ENCODE measurements at regions of chr16 and their contacts with region 1.

Region 1: DNA sequence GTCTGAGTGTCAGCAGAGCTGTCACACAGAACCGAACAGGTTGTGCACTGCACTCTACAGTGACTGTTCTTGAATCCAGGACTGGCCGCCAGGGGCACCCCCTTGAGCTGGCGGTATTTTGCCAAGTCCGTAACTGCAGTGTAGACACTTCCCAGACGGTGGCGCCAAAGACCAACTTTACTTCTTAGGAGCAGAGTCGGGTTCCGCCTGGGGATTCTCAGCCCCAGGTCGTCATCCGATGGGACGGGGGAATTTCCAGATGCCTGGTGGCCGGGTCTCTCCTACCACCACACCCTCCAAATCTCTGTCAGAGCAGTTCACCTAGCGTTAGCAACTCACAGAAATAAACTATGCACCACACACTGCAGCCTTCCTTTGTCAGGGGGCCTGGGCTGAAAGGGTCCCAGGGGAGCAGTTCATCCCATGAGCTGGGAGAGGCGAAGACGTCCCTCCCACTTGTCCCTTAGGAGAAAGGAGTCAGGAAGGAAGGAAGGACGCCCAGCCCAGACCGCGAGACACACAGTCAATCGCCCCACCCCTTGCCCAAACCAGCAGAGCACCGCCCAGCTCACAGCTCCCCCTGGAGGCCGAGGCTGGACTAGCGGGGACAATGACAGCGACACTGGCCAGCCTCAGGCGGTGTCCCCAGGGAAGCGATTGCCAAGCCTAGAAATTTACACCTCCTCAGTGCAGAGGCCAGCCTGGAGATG is 7.4 kb upstream of the RIPOR1 start:
- DNase-seq: peak; percentile 89
- H3K4me3 ChIP-seq: peak overlapping the region; percentile 52 to 73
- H3K27ac ChIP-seq: peak overlapping the region; percentile 86 to 91
- H3K4me1 ChIP-seq: peaks cover 3 to 5% of the 10 kb centered on the region in 2 experiments; a peak in 2 of 4 replicates
- H3K27me3 ChIP-seq: no peaks in the 10 kb centered on the region
- CTCF ChIP-seq: peak; percentile 84
- EP300 ChIP-seq: peak in 1 of 2 experiments; percentile 2; a peak in 1 of 4 replicates
- RAD21 ChIP-seq: peak; percentile 94

Region 2: GRCh38 chr16:66988197-66988788 is 533.0 kb before region 1 on chr16 and contains the start of gene CES4A:
- CTCF ChIA-PET with region 1: no interaction called
- POLR2A ChIA-PET with region 1: no interaction called
- DNase-seq: no peak
- H3K4me3 ChIP-seq: no peak within 1 kb of the TSS
- H3K27ac ChIP-seq: no peak within 1 kb of the TSS
- H3K4me1 ChIP-seq: no peaks in the 10 kb centered on the region
- H3K27me3 ChIP-seq: no peaks in the 10 kb centered on the region
- CTCF ChIP-seq: no peak
- EP300 ChIP-seq: no peak
- RAD21 ChIP-seq: no peak
- polyA plus RNA-seq, gene CES4A: 7.3 and 13.2 TPM in 2 replicates

Region 3: DNA sequence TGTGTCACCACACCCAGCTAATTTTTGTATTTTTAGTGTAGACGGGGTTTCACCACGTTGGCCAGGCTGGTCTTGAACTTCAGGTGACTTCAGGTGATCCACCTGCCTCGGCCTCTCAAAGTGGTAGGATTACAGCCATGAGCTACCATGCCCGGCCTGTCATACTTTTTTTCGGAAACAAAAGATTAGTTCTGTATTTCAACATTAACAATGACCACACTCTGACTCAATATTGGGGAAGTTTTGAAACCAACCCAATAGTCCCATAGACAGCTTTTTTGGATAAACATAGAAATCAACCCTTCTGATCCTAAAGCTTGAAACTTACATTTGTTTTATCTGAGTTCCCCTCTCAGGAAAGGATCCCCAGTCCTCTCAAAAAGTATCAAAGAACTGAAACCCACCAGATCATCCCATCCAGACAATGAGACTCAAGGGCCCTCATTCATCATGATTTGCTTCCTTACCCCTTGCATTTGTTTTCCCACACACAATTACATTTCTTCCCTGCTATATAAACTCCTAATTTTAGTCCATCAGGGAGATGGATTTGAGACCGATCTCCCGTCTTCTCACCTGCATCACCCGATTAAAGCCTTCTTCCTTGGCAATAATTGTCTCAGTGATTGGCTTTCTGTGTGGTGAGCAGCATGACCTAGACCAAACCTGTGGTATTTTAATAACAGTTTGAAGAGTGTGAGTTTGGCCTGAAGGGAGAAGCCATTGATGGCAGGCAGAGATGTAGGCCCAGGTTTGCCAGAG is 30.7 kb before region 1 on chr16:
- CTCF ChIA-PET with region 1: interaction called, 104 read pairs
- POLR2A ChIA-PET with region 1: no interaction called
- DNase-seq: no peak
- H3K4me3 ChIP-seq: no peak overlapping the region
- H3K27ac ChIP-seq: no peak overlapping the region; a peak in 1 of 4 replicates
- H3K4me1 ChIP-seq: peaks cover 0 to 6% of the 10 kb centered on the region in 2 experiments; a peak in 1 of 4 replicates
- H3K27me3 ChIP-seq: no peaks in the 10 kb centered on the region
- CTCF ChIP-seq: no peak
- EP300 ChIP-seq: no peak
- RAD21 ChIP-seq: no peak

Region 4: DNA sequence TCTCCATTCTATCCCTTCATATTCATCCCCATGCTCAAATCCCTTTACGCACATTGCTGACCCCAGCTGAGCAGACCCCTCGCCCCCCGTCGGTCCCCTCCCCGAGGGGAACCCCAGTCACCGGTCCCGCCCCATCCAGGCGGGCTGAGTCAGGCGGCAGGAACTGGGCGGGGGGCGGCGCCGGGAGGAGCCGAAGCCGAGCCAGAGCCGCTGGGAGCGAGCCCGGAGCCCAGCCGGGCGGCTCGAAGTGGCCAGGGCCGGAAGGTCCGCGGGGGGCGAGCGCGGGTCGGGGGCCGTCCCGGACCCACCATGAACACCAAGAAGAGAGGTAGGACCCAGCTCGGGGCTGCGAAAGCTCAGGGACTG is 16.0 kb after region 1 on chr16:
- CTCF ChIA-PET with region 1: interaction called, 72 read pairs
- POLR2A ChIA-PET with region 1: interaction called, 5 read pairs
- DNase-seq: peak; percentile 85
- H3K4me3 ChIP-seq: peak overlapping the region; percentile 52 to 71
- H3K27ac ChIP-seq: peak overlapping the region in 1 of 2 experiments; percentile 47; a peak in 2 of 4 replicates
- H3K4me1 ChIP-seq: peaks cover 0 to 9% of the 10 kb centered on the region in 2 experiments; a peak in 1 of 4 replicates
- H3K27me3 ChIP-seq: no peaks in the 10 kb centered on the region
- CTCF ChIP-seq: no peak
- EP300 ChIP-seq: no peak
- RAD21 ChIP-seq: no peak

Region 5: GRCh38 chr16:67561824-67562525 is 40.7 kb after region 1 on chr16:
- CTCF ChIA-PET with region 1: interaction called, 86 read pairs
- POLR2A ChIA-PET with region 1: no interaction called
- DNase-seq: peak; percentile 98
- H3K4me3 ChIP-seq: peak overlapping the region; percentile 73 to 75
- H3K27ac ChIP-seq: peak overlapping the region; percentile 96
- H3K4me1 ChIP-seq: peaks cover 0 to 13% of the 10 kb centered on the region in 2 experiments; a peak in 2 of 4 replicates
- H3K27me3 ChIP-seq: no peaks in the 10 kb centered on the region
- CTCF ChIP-seq: no peak
- EP300 ChIP-seq: peak in 1 of 2 experiments; percentile 9; a peak in 1 of 4 replicates
- RAD21 ChIP-seq: no peak

Region 6: DNA sequence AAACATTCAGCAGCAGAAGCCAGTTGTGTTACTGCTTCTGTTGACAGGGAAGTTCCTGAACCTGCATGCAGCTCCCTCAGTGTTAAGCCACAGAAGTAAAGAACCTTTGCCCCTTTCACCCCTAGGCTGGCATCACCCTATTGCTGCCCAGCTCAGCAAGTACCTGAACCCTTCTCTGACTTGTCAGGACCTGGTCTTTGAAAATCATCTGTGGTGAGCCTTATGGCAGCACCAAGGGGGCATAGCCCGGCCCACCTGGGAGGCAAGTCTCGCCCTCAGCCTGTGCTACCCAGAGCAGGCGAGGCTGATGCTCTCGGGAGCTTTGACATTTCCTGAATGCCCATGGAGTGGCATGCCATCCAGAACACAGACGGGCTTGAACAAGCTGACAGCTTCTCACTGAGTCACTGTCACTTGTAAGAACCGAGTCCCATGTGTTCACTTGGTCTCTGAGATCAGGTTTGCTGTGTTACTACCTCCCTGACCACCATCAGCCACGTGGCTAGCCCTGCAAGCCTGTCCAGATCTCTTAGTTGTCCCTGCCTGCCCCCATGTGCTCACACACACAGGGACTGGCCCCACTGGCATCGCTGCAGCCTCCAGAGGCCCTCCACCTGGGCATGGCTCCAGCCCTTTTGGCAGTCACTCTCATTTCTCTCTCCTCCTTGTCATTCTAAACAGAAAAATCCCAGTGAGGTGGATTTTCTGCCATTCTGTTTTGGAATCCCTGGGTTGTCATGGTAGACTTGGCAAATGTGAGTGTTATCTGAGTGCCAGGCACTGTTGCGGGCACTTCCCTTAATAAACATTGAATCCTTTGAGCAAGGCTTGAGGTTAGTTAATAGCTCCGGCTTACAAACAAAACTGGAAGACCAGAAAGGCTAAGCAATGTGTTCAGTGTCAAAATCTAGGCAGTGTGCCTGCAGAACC is 120.8 kb after region 1 on chr16:
- CTCF ChIA-PET with region 1: interaction called, 98 read pairs
- POLR2A ChIA-PET with region 1: no interaction called
- DNase-seq: no peak
- H3K4me3 ChIP-seq: no peak overlapping the region
- H3K27ac ChIP-seq: no peak overlapping the region
- H3K4me1 ChIP-seq: peaks cover 0 to 4% of the 10 kb centered on the region in 2 experiments; a peak in 1 of 4 replicates
- H3K27me3 ChIP-seq: no peaks in the 10 kb centered on the region
- CTCF ChIP-seq: no peak
- EP300 ChIP-seq: no peak
- RAD21 ChIP-seq: no peak

Region 7: GRCh38 chr16:67685388-67686112 is 164.3 kb after region 1 on chr16:
- CTCF ChIA-PET with region 1: interaction called, 11 read pairs
- POLR2A ChIA-PET with region 1: no interaction called
- DNase-seq: no peak
- H3K4me3 ChIP-seq: no peak overlapping the region
- H3K27ac ChIP-seq: no peak overlapping the region
- H3K4me1 ChIP-seq: no peaks in the 10 kb centered on the region
- H3K27me3 ChIP-seq: no peaks in the 10 kb centered on the region
- CTCF ChIP-seq: no peak
- EP300 ChIP-seq: no peak
- RAD21 ChIP-seq: no peak

Region 8: DNA sequence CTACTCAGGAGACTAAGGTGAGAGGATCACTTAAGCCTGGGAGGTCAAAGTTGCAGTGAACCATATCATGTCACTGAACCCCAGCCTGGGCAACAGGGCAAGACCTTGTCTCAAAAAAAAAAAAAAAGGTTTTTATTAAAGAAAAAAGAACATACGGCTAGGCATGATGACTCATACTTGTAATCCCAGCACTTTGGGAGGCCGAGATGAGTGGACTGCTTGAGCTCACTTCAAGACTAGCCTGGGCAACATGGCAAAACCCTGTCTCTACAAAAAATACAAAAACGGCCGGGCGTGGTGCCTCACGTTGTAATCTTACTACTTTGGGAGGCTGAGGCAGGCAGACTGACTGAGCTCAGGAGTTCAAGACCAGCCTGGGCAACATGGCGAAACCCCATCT is 246.7 kb after region 1 on chr16:
- CTCF ChIA-PET with region 1: no interaction called
- POLR2A ChIA-PET with region 1: no interaction called
- DNase-seq: no peak
- H3K4me3 ChIP-seq: no peak overlapping the region
- H3K27ac ChIP-seq: 0 out of 4 replicates have a peak overlapping the region, but pooled peaks of 1 of the 2 experiments have one; percentile 25
- H3K4me1 ChIP-seq: peaks cover 0 to 3% of the 10 kb centered on the region in 2 experiments; a peak in 1 of 4 replicates
- H3K27me3 ChIP-seq: no peaks in the 10 kb centered on the region
- CTCF ChIP-seq: no peak
- EP300 ChIP-seq: no peak
- RAD21 ChIP-seq: no peak